ENCODE measurements at regions of chr2 and their contacts with region 1.

Region 1: DNA sequence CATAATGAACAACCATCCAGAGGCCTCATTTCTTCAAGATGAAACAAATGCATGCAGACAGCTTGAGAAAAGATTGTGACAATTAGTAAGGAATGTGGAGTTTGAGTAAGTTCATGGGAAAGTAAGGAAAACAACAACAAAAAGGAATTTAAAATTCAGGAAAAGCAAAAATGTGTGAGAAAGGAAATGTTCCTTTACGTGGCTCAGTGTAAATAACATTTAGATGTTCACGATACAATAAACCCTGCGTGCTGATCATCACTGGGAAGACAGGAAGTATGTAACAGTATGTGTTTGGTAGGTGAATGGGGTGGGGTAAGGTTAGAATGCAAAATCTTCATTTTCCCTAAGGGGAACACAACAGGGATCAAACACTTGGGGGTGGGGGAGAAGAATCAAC is 72.7 kb downstream of the TRIP12 start:
- DNase-seq: no peak
- H3K4me3 Mint-ChIP-seq: no peak overlapping the region
- H3K27ac Mint-ChIP-seq: no peak overlapping the region
- H3K4me1 Mint-ChIP-seq: peaks cover 15% of the 10 kb centered on the region
- H3K27me3 Mint-ChIP-seq: no peaks in the 10 kb centered on the region
- CTCF ChIP-seq: no peak

Region 2: GRCh38 chr2:229884775-229885699 is 36.0 kb after region 1 on chr2:
- CTCF ChIA-PET with region 1: no interaction called
- intact Hi-C with region 1: loop called (anchors 5 kb)
- DNase-seq: no peak
- H3K4me3 Mint-ChIP-seq: no peak overlapping the region
- H3K27ac Mint-ChIP-seq: no peak overlapping the region
- H3K4me1 Mint-ChIP-seq: peaks cover 24% of the 10 kb centered on the region
- H3K27me3 Mint-ChIP-seq: no peaks in the 10 kb centered on the region
- CTCF ChIP-seq: no peak

Region 3: GRCh38 chr2:229900012-229900411 is 50.9 kb after region 1 on chr2:
- CTCF ChIA-PET with region 1: no interaction called
- intact Hi-C with region 1: no loop called
- DNase-seq: no peak
- H3K4me3 Mint-ChIP-seq: no peak overlapping the region
- H3K27ac Mint-ChIP-seq: no peak overlapping the region
- H3K4me1 Mint-ChIP-seq: peaks cover 35% of the 10 kb centered on the region
- H3K27me3 Mint-ChIP-seq: no peaks in the 10 kb centered on the region
- CTCF ChIP-seq: no peak

Region 4: GRCh38 chr2:230202430-230203109 is 353.5 kb after region 1 on chr2:
- CTCF ChIA-PET with region 1: no interaction called
- intact Hi-C with region 1: no loop called
- DNase-seq: no peak
- H3K4me3 Mint-ChIP-seq: no peak overlapping the region
- H3K27ac Mint-ChIP-seq: no peak overlapping the region
- H3K4me1 Mint-ChIP-seq: peaks cover 17% of the 10 kb centered on the region
- H3K27me3 Mint-ChIP-seq: no peaks in the 10 kb centered on the region
- CTCF ChIP-seq: no peak